Activated CD8-positive, alpha-beta T cell treated with anti-CD3 and anti-CD28 coated beads, Interleukin-2, amount 10 ng/mL, durations not matched to agents 7 days and 5 days (primary cell): ENCODE measurements at regions of chr4 and their contacts with region 1.

Region 1: DNA sequence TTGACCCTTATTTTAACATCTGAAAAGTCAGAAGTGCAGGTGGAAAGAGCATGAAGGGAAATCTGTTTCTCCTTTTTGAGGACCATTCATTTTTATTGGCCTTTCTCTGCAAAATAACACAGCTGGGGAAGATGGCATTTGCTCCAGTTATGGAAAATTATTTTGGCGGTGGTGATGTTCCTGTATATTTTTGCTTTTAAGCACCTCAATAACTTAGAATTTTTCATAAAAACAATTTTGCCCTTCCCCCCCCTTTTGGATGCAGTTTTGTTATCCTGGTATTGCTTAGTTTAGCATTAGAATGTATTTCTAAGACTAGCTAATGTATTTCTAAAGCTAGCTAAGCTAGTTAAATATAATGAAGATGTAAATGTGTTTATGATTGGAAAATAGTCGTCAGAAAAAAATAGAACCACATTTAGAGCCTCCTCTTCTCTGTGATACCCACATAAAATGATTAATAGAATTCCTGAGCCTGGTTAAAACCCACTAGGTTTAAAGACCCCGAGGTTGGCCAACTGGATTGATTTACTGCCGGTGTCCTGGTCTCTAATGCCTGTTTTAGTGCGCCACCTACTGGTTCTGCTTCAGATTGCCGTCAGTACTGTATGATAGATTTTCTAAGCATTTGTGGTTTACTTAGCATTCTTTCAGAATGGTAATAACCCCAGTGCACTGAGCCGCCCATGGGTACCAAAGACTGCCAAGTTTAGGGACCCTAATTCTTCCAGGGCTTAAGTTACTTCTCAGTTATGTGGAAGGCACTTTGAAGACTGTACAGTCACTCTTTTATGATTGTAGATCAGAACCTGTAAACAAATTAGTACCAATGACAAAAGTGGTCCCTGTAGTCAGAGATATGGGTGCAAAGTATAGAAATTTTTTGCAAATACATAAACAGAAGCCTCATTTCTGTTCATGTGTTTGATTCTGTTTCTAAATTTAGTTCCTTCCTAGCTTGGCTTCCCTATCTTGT is 11.4 kb downstream of the KLF3 start:
- DNase-seq: peak; percentile 90
- ATAC-seq: peak; percentile 77
- H3K4me3 Mint-ChIP-seq: no peak overlapping the region
- H3K27ac Mint-ChIP-seq: no peak overlapping the region
- H3K4me1 Mint-ChIP-seq: peaks cover 61% of the 10 kb centered on the region
- H3K27me3 Mint-ChIP-seq: no peaks in the 10 kb centered on the region

Region 2: DNA sequence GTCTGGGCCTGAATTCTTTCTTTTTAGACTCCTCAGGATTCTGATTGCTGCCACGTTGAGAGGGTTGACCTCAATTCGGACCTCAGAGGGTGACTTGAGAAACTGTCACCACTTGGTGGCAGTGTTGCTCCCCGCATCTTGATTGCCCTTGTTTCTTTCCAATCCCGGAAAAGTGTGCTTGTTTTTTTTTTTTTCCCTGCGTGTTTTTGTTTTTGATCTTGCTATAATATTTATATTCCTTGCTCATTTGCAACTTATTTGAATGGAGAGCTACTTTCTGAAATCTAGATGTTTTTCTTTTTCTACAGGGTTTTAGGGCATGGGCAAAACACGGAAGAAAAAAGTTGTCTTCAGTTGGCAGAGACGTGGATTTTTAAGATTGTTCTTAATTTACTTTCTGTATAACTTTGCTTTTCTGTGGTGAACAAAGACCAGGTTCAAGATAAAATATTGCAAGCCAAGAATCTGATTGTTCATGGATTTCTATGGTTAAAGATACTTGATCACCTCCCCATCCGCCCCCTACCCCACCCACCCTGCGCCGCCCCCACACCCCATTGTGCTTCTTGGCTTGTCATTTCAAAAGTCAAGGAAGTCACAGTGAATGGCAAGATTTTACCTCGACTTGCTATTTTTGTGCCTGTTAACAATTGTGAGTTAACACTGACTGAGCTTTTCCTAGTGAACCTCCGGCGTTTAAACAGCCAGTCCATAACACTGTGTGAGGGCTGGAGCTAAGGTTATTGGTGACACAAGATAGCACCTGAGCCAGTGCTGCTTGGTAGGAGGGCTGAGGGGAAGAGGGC is 613.1 kb before region 1 on chr4:
- CTCF ChIA-PET with region 1: interaction called, 10 read pairs
- POLR2A ChIA-PET with region 1: no interaction called
- DNase-seq: peak; percentile 75
- ATAC-seq: peak; percentile 69
- H3K4me3 Mint-ChIP-seq: peak overlapping the region; percentile 61
- H3K27ac Mint-ChIP-seq: peak overlapping the region; percentile 58
- H3K4me1 Mint-ChIP-seq: peaks cover 15% of the 10 kb centered on the region
- H3K27me3 Mint-ChIP-seq: no peaks in the 10 kb centered on the region

Region 3: GRCh38 chr4:38310446-38311043 is 364.9 kb before region 1 on chr4:
- CTCF ChIA-PET with region 1: interaction called, 17 read pairs
- POLR2A ChIA-PET with region 1: no interaction called
- DNase-seq: peak; percentile 88
- ATAC-seq: peak; percentile 96
- H3K4me3 Mint-ChIP-seq: peak overlapping the region; percentile 54
- H3K27ac Mint-ChIP-seq: peak overlapping the region; percentile 87
- H3K4me1 Mint-ChIP-seq: peaks cover 60% of the 10 kb centered on the region
- H3K27me3 Mint-ChIP-seq: no peaks in the 10 kb centered on the region

Region 4: DNA sequence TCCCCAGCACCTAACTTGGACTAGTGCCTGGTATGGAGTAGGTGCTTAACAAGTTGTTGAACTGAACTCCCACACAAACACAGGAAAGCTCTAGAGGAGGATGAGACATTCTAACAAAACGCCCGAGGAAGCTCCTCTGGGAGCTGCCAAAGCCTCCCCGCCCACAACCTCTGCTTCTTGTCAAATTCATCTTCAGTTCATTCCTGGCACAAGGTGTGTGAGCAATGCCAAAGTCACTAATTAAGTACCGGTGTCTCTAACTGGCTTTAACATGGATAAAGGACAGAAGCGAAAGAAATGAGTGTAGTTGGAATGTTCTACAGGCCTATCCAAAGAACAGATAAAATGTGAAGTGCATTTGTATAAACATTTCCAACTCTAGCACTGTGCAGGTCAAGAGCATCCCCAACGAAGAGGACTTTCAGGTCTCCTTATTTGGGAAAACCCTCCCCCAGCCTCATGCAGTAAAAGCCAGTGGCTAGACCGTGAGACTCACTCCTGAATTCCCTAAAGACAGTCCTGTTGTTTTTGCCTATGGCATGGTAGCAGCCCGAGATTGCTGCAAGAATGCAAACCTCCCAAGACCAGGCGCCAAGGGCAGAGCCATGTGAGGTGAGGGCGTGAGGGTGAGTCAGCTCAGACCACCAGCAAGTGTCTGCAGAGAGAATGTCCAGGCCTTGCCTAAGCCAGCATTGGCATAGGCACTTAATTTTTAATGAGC is 83.7 kb before region 1 on chr4:
- CTCF ChIA-PET with region 1: no interaction called
- POLR2A ChIA-PET with region 1: no interaction called
- DNase-seq: no peak
- ATAC-seq: no peak
- H3K4me3 Mint-ChIP-seq: no peak overlapping the region
- H3K27ac Mint-ChIP-seq: no peak overlapping the region
- H3K4me1 Mint-ChIP-seq: no peaks in the 10 kb centered on the region
- H3K27me3 Mint-ChIP-seq: no peaks in the 10 kb centered on the region

Region 5: GRCh38 chr4:38663801-38664705 is 11.4 kb before region 1 on chr4 and contains the start of gene KLF3:
- CTCF ChIA-PET with region 1: interaction called, 27 read pairs
- POLR2A ChIA-PET with region 1: no interaction called
- DNase-seq: peak; percentile 90
- ATAC-seq: peak; percentile 88
- H3K4me3 Mint-ChIP-seq: peak within 1 kb of the TSS; percentile 78
- H3K27ac Mint-ChIP-seq: peak within 1 kb of the TSS; percentile 75
- H3K4me1 Mint-ChIP-seq: peaks cover 53% of the 10 kb centered on the region
- H3K27me3 Mint-ChIP-seq: peaks cover 5% of the 10 kb centered on the region
- total RNA-seq, gene KLF3: 8.1 to 8.3 TPM

Region 6: DNA sequence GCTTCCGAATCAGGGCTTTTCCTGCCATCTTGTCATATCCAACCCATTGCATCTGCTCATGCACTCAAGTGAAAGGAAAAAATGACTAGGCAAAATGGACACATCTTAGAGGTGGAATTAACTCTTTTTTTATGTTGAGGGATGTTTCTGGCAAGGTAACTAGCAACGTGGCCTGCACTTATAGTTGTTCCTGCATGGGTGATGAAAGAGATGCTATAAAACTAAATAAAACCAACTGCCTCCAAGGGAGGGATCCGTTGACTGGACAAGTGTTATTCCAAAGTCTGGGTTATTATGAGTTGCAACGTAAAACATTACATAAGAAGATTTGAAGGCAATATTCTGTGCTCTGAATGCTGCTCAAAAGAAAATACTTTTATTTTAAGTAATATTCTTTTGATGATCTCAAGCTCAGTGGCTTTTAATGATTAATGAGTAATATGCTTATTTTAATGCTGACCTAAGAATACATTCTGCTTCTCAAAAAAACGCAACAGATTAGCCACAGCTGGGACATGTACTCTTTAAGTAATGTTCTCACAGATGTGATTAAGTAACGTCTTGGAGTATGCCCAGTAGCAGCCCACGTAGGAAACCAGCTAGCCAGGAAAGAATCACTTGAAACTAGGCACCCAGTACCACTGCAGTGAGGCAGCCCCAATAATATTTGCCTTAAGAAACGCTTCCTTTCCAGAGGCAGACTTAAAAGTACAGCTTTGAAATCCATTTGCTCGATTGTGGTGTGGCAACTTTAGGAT is 16.0 kb after region 1 on chr4:
- CTCF ChIA-PET with region 1: interaction called, 17 read pairs
- POLR2A ChIA-PET with region 1: no interaction called
- DNase-seq: no peak
- ATAC-seq: no peak
- H3K4me3 Mint-ChIP-seq: no peak overlapping the region
- H3K27ac Mint-ChIP-seq: no peak overlapping the region
- H3K4me1 Mint-ChIP-seq: peaks cover 16% of the 10 kb centered on the region
- H3K27me3 Mint-ChIP-seq: no peaks in the 10 kb centered on the region